Tibial artery (tissue), 4 donors: ENCODE measurements at regions of chr1 and their contacts with region 1.

Region 1: GRCh38 chr1:153985941-153986761 is at the start of gene RAB13:
- DNase-seq: peak; percentile 88 to 97
- H3K4me3 ChIP-seq: peak within 1 kb of the TSS; percentile 61 to 78
- H3K27ac ChIP-seq: peak within 1 kb of the TSS; percentile 76 to 95
- H3K4me1 ChIP-seq: peaks cover 0 to 29% (median 22%) of the 10 kb centered on the region in 4 donors
- H3K27me3 ChIP-seq: no peaks in the 10 kb centered on the region
- CTCF ChIP-seq: no peak

Region 2: DNA sequence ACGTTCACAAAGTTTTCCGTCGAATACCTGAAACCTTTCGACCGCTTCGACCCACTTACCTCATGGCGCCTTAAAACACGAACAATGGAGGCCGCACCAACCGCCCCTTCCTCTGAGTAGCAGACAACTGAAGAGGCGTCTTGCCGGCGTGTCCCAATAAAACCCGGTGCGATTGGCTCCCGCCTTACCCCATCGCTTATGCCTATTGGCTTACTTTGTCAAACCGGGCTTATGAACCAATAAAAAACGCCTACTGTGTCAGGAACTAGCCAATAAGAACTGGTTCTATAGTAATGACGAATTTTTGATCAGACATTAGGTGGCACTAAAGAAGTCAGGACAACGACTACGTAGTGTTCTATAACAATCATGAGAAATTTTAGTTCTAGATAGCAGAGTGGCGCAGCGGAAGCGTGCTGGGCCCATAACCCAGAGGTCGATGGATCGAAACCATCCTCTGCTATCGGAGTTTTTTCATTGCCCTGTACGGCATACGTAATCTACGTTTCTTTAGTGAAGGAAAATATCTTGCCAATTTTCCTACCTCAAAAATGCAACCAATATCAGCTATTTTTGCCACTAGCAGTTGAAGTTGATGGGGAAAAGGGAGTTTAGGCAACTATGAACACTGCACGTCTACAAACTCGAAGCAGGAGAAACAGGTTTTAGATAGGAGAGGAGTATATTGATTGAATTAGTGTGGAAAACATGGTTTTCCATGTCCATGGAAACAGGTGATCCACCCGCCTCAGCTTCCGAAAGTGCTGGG is 315.1 kb before region 1 on chr1 and contains the start of gene ILF2:
- intact Hi-C with region 1: loop called (anchors 10 kb)
- DNase-seq: peak; percentile 95 to 99
- H3K4me3 ChIP-seq: peak within 1 kb of the TSS; percentile 73 to 78
- H3K27ac ChIP-seq: peak within 1 kb of the TSS; percentile 84 to 87
- H3K4me1 ChIP-seq: peaks cover 0 to 23% (median 17%) of the 10 kb centered on the region in 4 donors
- H3K27me3 ChIP-seq: no peaks in the 10 kb centered on the region
- CTCF ChIP-seq: peak in 1 of 2 experiments; percentile 37

Region 3: GRCh38 chr1:153796791-153797659 is 189.1 kb before region 1 on chr1:
- intact Hi-C with region 1: loop called (anchors 2 kb)
- DNase-seq: peak; percentile 87 to 90
- H3K4me3 ChIP-seq: no peak overlapping the region
- H3K27ac ChIP-seq: no peak overlapping the region
- H3K4me1 ChIP-seq: no peaks in the 10 kb centered on the region
- H3K27me3 ChIP-seq: no peaks in the 10 kb centered on the region
- CTCF ChIP-seq: peak; percentile 91 to 96

Region 4: GRCh38 chr1:153946622-153947241 is 39.4 kb before region 1 on chr1 and contains the start of gene DENND4B:
- intact Hi-C with region 1: loop called (anchors 5 kb)
- DNase-seq: peak; percentile 75 to 90
- H3K4me3 ChIP-seq: peak within 1 kb of the TSS; percentile 87 to 93
- H3K27ac ChIP-seq: peak within 1 kb of the TSS; percentile 94 to 98
- H3K4me1 ChIP-seq: peaks cover 0 to 31% (median 15%) of the 10 kb centered on the region in 4 donors
- H3K27me3 ChIP-seq: no peaks in the 10 kb centered on the region
- CTCF ChIP-seq: peak; percentile 85 to 98

Region 5: GRCh38 chr1:154714638-154715037 is 728.5 kb after region 1 on chr1:
- intact Hi-C with region 1: no loop called
- DNase-seq: peak; percentile 60 to 71
- H3K4me3 ChIP-seq: no peak overlapping the region
- H3K27ac ChIP-seq: no peak overlapping the region
- H3K4me1 ChIP-seq: no peaks in the 10 kb centered on the region
- H3K27me3 ChIP-seq: peaks cover 0 to 7% of the 10 kb centered on the region in 2 donors
- CTCF ChIP-seq: no peak